Right ventricle myocardium inferior (tissue), 1 donor: ENCODE measurements at regions of chr3 and their contacts with region 1.

Region 1: GRCh38 chr3:54859184-54859583 is 68.7 kb downstream of the LRTM1 start:
- DNase-seq: no peak
- ATAC-seq: no peak

Region 2: DNA sequence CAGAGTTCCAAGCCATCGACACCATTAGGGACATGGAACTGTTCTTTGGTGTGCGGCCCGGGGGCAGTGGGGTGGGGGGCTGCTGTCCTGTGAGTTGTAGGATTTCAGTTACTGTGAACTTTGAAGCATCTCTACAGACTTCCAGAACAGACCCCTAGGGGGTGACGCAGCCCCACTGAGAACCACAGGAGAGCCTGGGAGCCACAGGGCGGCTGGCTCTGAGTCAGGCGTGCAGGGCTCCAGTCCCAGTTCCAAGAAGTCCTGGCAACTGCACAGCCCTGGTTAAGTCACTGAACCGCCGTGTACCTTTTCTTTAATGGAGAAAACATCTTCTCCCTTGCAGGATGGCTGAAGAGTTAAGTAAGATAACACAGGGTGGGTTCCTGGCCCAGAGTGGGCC is 92.2 kb after region 1 on chr3:
- intact Hi-C with region 1: loop called (anchors 5 kb)
- DNase-seq: peak; percentile 87
- ATAC-seq: peak; percentile 96